MCF 10A (cell line): ENCODE measurements at regions of chr1 and their contacts with region 1.

Region 1: GRCh38 chr1:62131093-62131725 is 63.4 kb upstream of the L1TD1 start:
- DNase-seq: peak; percentile 69
- H3K4me3 Mint-ChIP-seq: no peak overlapping the region
- H3K27ac Mint-ChIP-seq: no peak overlapping the region
- H3K4me1 Mint-ChIP-seq: no peaks in the 10 kb centered on the region
- H3K27me3 Mint-ChIP-seq: no peaks in the 10 kb centered on the region
- CTCF ChIP-seq: peak; percentile 73

Region 2: GRCh38 chr1:61221642-61222041 is 909.6 kb before region 1 on chr1:
- CTCF ChIA-PET with region 1: no interaction called
- POLR2A ChIA-PET with region 1: no interaction called
- intact Hi-C with region 1: no loop called
- DNase-seq: no peak
- H3K4me3 Mint-ChIP-seq: no peak overlapping the region
- H3K27ac Mint-ChIP-seq: no peak overlapping the region
- H3K4me1 Mint-ChIP-seq: peaks cover 11% of the 10 kb centered on the region
- H3K27me3 Mint-ChIP-seq: no peaks in the 10 kb centered on the region
- CTCF ChIP-seq: no peak

Region 3: DNA sequence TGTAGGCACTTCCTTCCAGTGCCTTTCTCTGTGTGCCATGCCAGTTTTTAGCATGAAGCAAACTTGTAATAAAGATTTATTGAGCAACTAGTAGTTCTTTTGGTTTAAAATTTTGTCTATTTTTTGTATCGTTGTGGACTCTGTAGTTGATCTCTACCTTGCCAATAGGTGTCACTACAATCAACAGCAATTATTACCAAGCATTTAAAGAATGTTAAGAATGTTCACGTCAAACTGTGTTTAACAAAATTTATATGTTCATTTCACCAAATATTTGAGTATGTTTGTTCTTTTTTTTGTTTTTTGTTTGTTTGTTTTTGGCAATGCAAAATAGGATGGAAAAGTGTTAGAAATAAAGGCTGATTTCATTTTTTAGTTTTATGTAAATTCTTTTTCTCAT is 180.8 kb before region 1 on chr1:
- CTCF ChIA-PET with region 1: interaction called, 4 read pairs
- POLR2A ChIA-PET with region 1: no interaction called
- intact Hi-C with region 1: loop called (anchors 5 kb)
- DNase-seq: peak; percentile 24
- H3K4me3 Mint-ChIP-seq: no peak overlapping the region
- H3K27ac Mint-ChIP-seq: no peak overlapping the region
- H3K4me1 Mint-ChIP-seq: peaks cover 10% of the 10 kb centered on the region
- H3K27me3 Mint-ChIP-seq: no peaks in the 10 kb centered on the region
- CTCF ChIP-seq: peak; percentile 32

Region 4: GRCh38 chr1:61967750-61968149 is 163.5 kb before region 1 on chr1:
- CTCF ChIA-PET with region 1: no interaction called
- POLR2A ChIA-PET with region 1: no interaction called
- intact Hi-C with region 1: no loop called
- DNase-seq: no peak
- H3K4me3 Mint-ChIP-seq: no peak overlapping the region
- H3K27ac Mint-ChIP-seq: no peak overlapping the region
- H3K4me1 Mint-ChIP-seq: no peaks in the 10 kb centered on the region
- H3K27me3 Mint-ChIP-seq: no peaks in the 10 kb centered on the region
- CTCF ChIP-seq: no peak

Region 5: GRCh38 chr1:61981870-61982660 is 149.1 kb before region 1 on chr1:
- CTCF ChIA-PET with region 1: no interaction called
- POLR2A ChIA-PET with region 1: no interaction called
- intact Hi-C with region 1: no loop called
- DNase-seq: no peak
- H3K4me3 Mint-ChIP-seq: no peak overlapping the region
- H3K27ac Mint-ChIP-seq: no peak overlapping the region
- H3K4me1 Mint-ChIP-seq: no peaks in the 10 kb centered on the region
- H3K27me3 Mint-ChIP-seq: no peaks in the 10 kb centered on the region
- CTCF ChIP-seq: no peak

Region 6: DNA sequence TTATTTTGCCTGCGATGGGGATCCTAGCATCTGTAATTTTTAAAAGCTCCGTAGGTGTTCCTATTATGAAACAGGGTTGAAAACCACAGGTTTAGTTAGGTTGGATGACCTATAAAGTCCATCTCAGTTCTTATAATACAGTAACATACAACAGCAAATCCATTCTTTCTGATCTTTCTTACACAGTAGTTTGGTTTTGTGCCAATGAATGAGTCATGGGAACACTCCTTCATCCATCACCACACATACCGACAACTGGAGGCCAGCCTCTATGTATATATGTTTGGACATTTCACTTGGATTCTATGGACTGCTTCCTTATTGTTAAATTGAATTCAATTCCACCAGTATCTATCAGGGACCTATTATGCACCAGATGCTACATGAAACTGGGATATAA is 54.9 kb before region 1 on chr1:
- CTCF ChIA-PET with region 1: interaction called, 13 read pairs
- POLR2A ChIA-PET with region 1: interaction called, 3 read pairs
- intact Hi-C with region 1: no loop called
- DNase-seq: peak; percentile 95
- H3K4me3 Mint-ChIP-seq: no peak overlapping the region
- H3K27ac Mint-ChIP-seq: no peak overlapping the region
- H3K4me1 Mint-ChIP-seq: no peaks in the 10 kb centered on the region
- H3K27me3 Mint-ChIP-seq: no peaks in the 10 kb centered on the region
- CTCF ChIP-seq: no peak

Region 7: DNA sequence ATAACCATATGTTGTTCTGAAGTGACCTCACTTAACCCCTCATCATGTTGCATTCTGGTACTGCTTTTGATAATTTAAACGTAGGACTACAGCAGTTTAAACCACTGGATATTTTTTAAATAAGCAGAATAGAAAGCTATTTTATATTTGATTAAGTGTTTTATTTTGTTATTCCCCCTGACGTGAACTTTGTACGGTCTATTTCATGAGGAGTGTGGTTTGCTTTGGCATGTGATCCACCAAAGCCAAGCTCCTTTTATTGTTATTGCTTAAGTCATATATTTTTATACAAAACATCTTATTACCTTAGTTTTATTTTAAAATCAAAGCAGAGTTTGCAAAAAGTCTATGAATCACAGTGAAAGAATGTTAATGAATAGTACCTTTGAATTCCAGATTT is 37.9 kb before region 1 on chr1:
- CTCF ChIA-PET with region 1: interaction called, 17 read pairs
- POLR2A ChIA-PET with region 1: no interaction called
- intact Hi-C with region 1: no loop called
- DNase-seq: no peak
- H3K4me3 Mint-ChIP-seq: no peak overlapping the region
- H3K27ac Mint-ChIP-seq: no peak overlapping the region
- H3K4me1 Mint-ChIP-seq: no peaks in the 10 kb centered on the region
- H3K27me3 Mint-ChIP-seq: no peaks in the 10 kb centered on the region
- CTCF ChIP-seq: no peak

Region 8: GRCh38 chr1:62111084-62111483 is 20.1 kb before region 1 on chr1:
- CTCF ChIA-PET with region 1: interaction called, 50 read pairs
- POLR2A ChIA-PET with region 1: no interaction called
- intact Hi-C with region 1: no loop called
- DNase-seq: no peak
- H3K4me3 Mint-ChIP-seq: no peak overlapping the region
- H3K27ac Mint-ChIP-seq: no peak overlapping the region
- H3K4me1 Mint-ChIP-seq: no peaks in the 10 kb centered on the region
- H3K27me3 Mint-ChIP-seq: no peaks in the 10 kb centered on the region
- CTCF ChIP-seq: no peak

Region 9: DNA sequence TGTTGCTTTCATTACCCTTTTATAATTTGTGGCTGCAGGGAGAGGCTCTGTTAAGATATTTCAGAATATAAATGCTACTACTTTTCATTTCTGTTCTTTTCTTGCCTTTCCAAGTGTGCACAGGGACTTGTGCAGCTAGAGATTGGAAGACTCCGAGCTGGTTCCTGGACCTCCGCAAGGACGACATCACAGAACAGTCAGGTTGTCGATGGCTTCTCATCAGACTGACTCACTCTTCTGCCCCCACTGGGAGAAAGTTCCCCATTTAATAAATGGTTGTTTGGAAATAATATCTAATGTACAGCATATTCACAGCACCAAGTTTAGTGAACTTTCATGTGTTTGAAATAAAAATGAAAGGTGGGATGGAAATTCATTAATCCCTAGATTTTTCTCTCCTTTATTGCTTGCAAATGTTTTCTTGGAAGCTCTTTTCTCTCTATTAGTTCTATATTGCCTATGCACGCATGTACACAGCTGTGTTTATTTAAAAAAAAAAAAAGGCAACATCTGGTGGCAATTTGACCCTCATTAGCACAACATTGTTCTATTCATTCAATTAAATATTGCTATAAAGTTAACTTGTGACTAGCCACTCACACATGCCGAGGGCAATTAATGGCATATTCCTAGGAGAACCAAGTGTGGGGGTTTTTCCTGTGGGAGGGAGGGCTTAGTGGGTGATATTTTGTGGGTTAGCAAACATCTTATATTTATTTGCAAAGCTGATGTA is 14.0 kb before region 1 on chr1:
- CTCF ChIA-PET with region 1: interaction called, 50 read pairs
- POLR2A ChIA-PET with region 1: interaction called, 3 read pairs
- intact Hi-C with region 1: no loop called
- DNase-seq: no peak
- H3K4me3 Mint-ChIP-seq: no peak overlapping the region
- H3K27ac Mint-ChIP-seq: no peak overlapping the region
- H3K4me1 Mint-ChIP-seq: no peaks in the 10 kb centered on the region
- H3K27me3 Mint-ChIP-seq: no peaks in the 10 kb centered on the region
- CTCF ChIP-seq: no peak

Region 10: DNA sequence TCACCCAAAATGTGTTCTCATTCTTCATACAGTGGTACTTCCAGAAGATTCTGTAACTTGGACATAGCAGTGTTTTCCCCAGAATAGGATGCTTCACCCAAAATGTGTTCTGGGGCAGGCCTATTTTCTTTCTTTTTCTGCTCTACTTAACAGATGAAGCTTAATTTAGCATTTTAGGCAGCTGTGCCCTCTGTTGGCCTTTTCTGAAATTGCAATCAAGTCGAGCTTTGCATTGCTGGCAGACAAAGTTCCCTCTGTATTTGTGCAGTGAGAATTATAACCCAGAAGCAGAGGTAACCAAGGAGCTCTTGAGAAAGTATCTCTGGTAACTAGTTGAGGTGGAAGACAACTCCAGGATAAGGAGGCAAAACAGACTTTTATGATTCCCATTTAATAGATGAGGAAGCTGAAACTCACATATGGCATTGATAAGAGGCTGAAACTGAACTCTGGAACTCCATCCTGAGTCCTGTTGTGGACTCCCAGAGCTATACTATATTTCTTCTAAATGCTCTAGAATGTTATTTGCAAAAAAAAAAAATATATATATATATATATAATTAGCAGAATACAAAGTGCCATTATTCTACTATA is 13.1 kb after region 1 on chr1:
- CTCF ChIA-PET with region 1: interaction called, 134 read pairs
- POLR2A ChIA-PET with region 1: no interaction called
- intact Hi-C with region 1: no loop called
- DNase-seq: peak; percentile 60
- H3K4me3 Mint-ChIP-seq: no peak overlapping the region
- H3K27ac Mint-ChIP-seq: no peak overlapping the region
- H3K4me1 Mint-ChIP-seq: peaks cover 6% of the 10 kb centered on the region
- H3K27me3 Mint-ChIP-seq: no peaks in the 10 kb centered on the region
- CTCF ChIP-seq: peak; percentile 62